H1 (cell line): ENCODE measurements at regions of chr4 and their contacts with region 1.

Region 1: GRCh38 chr4:88021824-88022223 is 14.4 kb downstream of the PKD2 start:
- DNase-seq: no peak
- H3K4me3 ChIP-seq: no peak overlapping the region
- H3K27ac ChIP-seq: no peak overlapping the region
- H3K4me1 ChIP-seq: no peaks in the 10 kb centered on the region
- H3K27me3 ChIP-seq: no peaks in the 10 kb centered on the region
- CTCF ChIP-seq: no peak
- EP300 ChIP-seq: no peak
- POLR2A ChIP-seq: no peak
- RAD21 ChIP-seq: no peak

Region 2: DNA sequence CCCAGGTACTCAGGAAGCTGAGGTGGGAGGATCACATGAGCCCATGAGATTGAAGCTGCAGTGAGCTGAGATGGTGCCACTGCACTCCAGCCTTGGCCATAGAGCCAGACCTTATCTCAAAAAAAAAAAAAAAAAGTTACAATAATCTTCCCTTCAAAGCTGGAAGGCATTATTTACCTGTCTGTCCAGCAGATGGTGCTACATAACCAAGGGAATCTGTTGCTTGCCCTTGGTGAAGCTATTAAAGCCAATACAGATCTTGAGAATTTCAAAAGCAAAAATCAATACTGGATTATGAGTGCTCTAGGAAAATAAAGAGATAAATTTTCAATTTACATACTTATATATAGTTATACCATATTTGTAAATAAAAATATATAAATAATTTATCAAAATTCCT is 11.5 kb after region 1 on chr4:
- CTCF ChIA-PET with region 1: interaction called, 24 read pairs
- POLR2A ChIA-PET with region 1: interaction called, 7 read pairs
- DNase-seq: no peak
- H3K4me3 ChIP-seq: no peak overlapping the region
- H3K27ac ChIP-seq: no peak overlapping the region
- H3K4me1 ChIP-seq: no peaks in the 10 kb centered on the region
- H3K27me3 ChIP-seq: no peaks in the 10 kb centered on the region
- CTCF ChIP-seq: peak in 2 of 3 experiments; percentile 55 to 61; a peak in 2 of 4 replicates
- EP300 ChIP-seq: no peak
- POLR2A ChIP-seq: no peak
- RAD21 ChIP-seq: peak; percentile 72 to 78